Breast epithelium (tissue), 4 donors: ENCODE measurements at regions of chrX and their contacts with region 1.

Region 1: DNA sequence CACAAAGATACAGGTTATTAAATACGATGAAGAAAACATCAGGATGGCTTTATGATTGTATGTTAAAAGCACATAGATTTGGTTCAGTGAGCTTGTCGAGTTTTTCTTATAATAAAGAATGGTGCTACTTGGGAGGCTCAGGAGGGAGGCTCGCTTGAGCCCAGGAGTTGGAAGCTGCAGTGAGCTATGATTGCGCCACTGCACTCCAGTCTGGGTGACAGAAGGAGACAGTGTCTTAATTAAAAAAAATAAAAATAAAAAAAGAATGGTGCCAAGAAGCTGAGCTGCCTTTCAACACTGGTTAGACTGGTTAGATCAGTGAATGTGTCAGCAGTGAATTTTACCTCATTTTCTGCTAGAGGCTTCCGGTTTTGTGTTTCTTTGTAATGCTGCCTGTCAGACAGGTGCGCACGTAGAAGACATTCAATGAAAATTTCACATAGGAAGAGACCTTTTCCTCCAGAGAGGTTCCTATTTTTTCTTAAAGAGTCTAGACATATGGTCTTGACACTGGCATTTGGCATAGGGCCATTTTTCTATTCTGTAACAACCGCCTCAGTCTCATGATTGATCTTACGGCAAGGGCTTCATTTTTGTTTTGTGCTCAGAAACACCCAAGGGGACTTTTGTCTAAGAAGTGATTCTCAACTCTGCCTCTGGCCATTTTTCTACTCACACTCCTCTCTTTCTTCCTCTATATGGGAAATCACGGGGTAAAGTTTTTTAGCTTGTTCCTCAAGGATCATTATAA is 15.0 kb upstream of the ARSF start:
- DNase-seq: peak in 1 of 2 donors; percentile 48
- H3K4me3 ChIP-seq: no peak overlapping the region
- H3K27ac ChIP-seq: peak overlapping the region; percentile 78 to 90
- H3K4me1 ChIP-seq: no peaks in the 10 kb centered on the region
- H3K27me3 ChIP-seq: no peaks in the 10 kb centered on the region
- CTCF ChIP-seq: no peak
- POLR2A ChIP-seq: no peak

Region 2: GRCh38 chrX:2398064-2398656 is 628.1 kb before region 1 on chrX:
- intact Hi-C with region 1: loop called (anchors 5 kb)
- DNase-seq: no peak
- H3K4me3 ChIP-seq: no peak overlapping the region
- H3K27ac ChIP-seq: no peak overlapping the region
- H3K4me1 ChIP-seq: no peaks in the 10 kb centered on the region
- H3K27me3 ChIP-seq: no peaks in the 10 kb centered on the region
- CTCF ChIP-seq: no peak
- POLR2A ChIP-seq: no peak

Region 3: GRCh38 chrX:3037218-3037617 is 11.0 kb after region 1 on chrX:
- intact Hi-C with region 1: no loop called
- DNase-seq: no peak
- H3K4me3 ChIP-seq: no peak overlapping the region
- H3K27ac ChIP-seq: no peak overlapping the region
- H3K4me1 ChIP-seq: no peaks in the 10 kb centered on the region
- H3K27me3 ChIP-seq: no peaks in the 10 kb centered on the region
- CTCF ChIP-seq: no peak
- POLR2A ChIP-seq: no peak